Activated B cell treated with CpG ODN at 0.5 μM for 24 hours (primary cell): ENCODE measurements at regions of chr12 and their contacts with region 1.

Region 1: DNA sequence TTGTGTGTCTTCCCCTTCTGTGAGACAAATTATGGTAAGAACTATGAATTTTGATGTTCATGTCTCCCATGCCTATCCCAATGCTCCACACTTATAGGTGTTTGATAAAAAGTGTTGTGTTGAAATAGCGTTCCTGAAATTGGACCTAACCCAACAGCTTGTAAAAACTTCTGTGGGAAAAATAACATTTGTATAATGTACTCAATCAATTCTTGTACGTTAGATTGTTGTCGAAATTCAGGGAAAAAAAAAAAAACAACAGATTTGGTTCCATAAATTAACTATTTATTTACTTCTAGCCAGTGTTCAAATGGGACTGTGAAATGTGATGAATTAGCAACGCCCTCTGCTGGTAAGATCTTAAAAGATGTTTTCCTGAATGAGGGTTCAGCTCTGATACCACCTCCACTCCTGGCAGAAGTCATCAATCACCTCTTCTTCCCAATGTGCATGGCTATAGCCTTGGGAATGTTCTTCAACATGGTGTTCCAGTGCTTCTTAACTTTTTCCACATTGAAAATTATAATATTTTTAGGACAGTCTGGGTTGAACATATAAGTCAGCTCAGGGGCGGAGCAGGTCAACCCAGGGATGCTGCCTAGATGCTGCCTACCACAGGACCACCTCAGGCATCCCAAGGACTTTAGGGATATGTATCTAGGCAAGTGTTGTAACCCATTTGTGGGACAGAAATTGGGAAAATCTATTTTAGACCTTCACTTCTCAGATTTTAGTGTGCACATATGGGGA is 170.6 kb downstream of the OTOGL start:
- DNase-seq: no peak
- ATAC-seq: no peak
- H3K4me3 Mint-ChIP-seq: no peak overlapping the region
- H3K27ac Mint-ChIP-seq: no peak overlapping the region
- H3K4me1 Mint-ChIP-seq: no peaks in the 10 kb centered on the region
- H3K27me3 Mint-ChIP-seq: peaks cover 2% of the 10 kb centered on the region
- CTCF ChIP-seq: peak; percentile 6

Region 2: GRCh38 chr12:79407671-79408622 is 862.0 kb before region 1 on chr12:
- CTCF ChIA-PET with region 1: interaction called, 7 read pairs
- POLR2A ChIA-PET with region 1: no interaction called
- intact Hi-C with region 1: loop called (anchors 1 kb)
- DNase-seq: no peak
- ATAC-seq: peak; percentile 66
- H3K4me3 Mint-ChIP-seq: no peak overlapping the region
- H3K27ac Mint-ChIP-seq: no peak overlapping the region
- H3K4me1 Mint-ChIP-seq: no peaks in the 10 kb centered on the region
- H3K27me3 Mint-ChIP-seq: no peaks in the 10 kb centered on the region
- CTCF ChIP-seq: no peak

Region 3: GRCh38 chr12:79886917-79887519 is 383.0 kb before region 1 on chr12:
- CTCF ChIA-PET with region 1: interaction called, 3 read pairs
- POLR2A ChIA-PET with region 1: no interaction called
- intact Hi-C with region 1: loop called (anchors 1 kb)
- DNase-seq: no peak
- ATAC-seq: peak; percentile 57
- H3K4me3 Mint-ChIP-seq: no peak overlapping the region
- H3K27ac Mint-ChIP-seq: no peak overlapping the region
- H3K4me1 Mint-ChIP-seq: peaks cover 73% of the 10 kb centered on the region
- H3K27me3 Mint-ChIP-seq: no peaks in the 10 kb centered on the region
- CTCF ChIP-seq: no peak

Region 4: DNA sequence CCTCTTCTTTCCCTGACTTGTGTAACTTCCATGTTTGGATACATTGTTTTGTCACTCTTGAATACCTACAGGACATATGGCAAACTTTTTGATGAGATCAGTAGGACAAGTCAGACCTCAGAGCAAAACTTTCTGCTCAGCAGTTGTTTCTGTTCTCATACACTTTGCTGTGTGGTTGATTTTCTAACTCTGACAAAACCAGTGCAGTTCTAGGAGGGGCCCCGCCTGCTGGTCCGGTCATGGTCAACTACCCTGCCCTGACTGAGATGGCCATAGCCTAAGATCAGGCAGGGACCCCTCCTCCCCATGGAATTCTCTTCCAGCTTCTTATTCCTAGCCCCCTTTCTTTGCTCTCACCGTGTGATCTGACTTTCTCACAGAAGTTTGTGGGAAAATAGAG is 77.9 kb before region 1 on chr12:
- CTCF ChIA-PET with region 1: interaction called, 5 read pairs
- POLR2A ChIA-PET with region 1: no interaction called
- intact Hi-C with region 1: loop called (anchors 5 kb)
- DNase-seq: no peak
- ATAC-seq: no peak
- H3K4me3 Mint-ChIP-seq: no peak overlapping the region
- H3K27ac Mint-ChIP-seq: no peak overlapping the region
- H3K4me1 Mint-ChIP-seq: no peaks in the 10 kb centered on the region
- H3K27me3 Mint-ChIP-seq: peaks cover 5% of the 10 kb centered on the region
- CTCF ChIP-seq: no peak

Region 5: DNA sequence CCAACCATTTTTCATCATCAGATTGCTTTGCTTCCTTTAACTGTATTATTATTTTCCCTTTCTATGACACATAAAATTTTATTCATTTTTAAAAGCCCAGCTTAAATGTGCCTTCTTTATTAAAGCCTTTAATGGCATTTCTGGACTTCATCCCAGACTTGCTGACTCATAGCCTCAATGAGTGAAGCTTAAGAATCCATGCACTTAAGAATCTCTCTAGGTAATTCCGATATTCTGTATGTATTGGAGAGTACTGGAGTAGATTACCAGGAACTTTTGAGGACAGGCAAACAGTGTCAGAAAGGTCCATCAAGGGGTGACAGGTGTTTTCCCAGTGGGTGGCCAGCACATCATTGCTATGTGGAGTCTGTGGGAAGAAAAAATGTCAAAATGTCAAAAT is 281.9 kb after region 1 on chr12:
- CTCF ChIA-PET with region 1: no interaction called
- POLR2A ChIA-PET with region 1: no interaction called
- intact Hi-C with region 1: no loop called
- DNase-seq: no peak
- ATAC-seq: no peak
- H3K4me3 Mint-ChIP-seq: no peak overlapping the region
- H3K27ac Mint-ChIP-seq: no peak overlapping the region
- H3K4me1 Mint-ChIP-seq: no peaks in the 10 kb centered on the region
- H3K27me3 Mint-ChIP-seq: no peaks in the 10 kb centered on the region
- CTCF ChIP-seq: no peak